Activated CD4-positive, alpha-beta T cell treated with anti-CD3 and anti-CD28 coated beads for 36 hours (primary cell): ENCODE measurements at regions of chr3 and their contacts with region 1.

Region 1: DNA sequence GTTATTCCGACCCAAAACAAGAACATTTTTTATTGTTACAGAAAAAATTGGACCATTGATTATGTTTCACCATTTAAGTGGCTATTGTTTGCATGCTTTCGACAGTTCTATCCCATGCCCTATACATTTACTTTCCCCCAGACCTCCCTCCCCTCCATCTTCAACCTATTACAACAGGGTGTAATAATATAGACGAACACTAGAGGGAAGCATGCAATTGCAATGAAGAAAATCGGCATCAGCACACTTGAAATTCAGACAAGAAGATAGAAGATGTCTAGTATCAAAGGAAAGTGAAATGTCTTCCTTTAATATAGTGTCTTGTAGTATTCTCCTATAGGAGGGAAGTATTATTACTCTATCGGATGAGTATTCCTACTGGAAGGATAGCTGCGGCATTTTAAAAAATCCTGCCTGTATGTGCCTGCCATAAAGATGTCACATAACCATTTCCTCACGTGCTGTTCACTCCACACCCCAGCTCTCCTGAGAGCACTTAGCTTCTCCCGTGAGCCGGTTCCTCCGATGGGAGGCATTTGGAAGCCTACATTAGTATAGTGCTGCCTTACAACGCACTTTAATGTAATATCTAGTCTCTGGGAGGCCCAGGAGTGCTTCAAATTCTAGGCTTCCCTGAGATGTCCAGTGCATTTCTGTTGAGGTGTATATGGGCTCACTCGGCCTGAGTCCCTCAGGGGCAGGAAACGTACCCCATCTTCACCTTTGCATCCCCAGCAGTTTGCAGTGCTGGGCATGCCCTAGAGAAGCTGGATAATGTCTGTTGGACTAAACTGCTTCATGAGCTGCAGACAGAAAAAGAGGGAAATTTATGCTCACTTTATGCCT is 17.8 kb upstream of the ERICH6 start:
- DNase-seq: no peak
- ATAC-seq: peak; percentile 64
- H3K4me3 Mint-ChIP-seq: no peak overlapping the region
- H3K27ac Mint-ChIP-seq: no peak overlapping the region
- H3K4me1 Mint-ChIP-seq: peaks cover 29% of the 10 kb centered on the region
- H3K27me3 Mint-ChIP-seq: no peaks in the 10 kb centered on the region

Region 2: DNA sequence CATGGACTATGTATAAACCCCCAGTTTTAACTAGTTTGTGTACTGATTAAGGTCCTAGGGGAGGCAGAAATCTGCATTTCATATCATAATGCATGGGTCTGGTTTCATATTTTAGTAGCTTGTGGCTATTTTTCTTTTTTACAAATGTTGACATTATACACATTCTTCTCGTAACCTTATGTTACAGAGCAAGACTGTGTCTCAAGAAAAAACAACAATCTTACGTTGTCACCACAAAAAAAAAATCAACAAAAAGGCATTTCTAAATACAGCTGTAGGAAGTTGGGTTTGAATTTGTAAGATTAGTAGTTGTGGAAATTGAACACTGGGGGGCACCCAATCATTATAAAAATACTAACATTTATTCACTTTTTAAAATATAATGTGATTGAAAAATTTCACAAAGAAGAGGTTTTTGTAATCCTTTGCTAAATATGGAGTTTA is 193.1 kb before region 1 on chr3:
- CTCF ChIA-PET with region 1: interaction called, 3 read pairs
- POLR2A ChIA-PET with region 1: no interaction called
- intact Hi-C with region 1: loop called (anchors 1 to 5 kb)
- DNase-seq: no peak
- ATAC-seq: no peak
- H3K4me3 Mint-ChIP-seq: no peak overlapping the region
- H3K27ac Mint-ChIP-seq: no peak overlapping the region
- H3K4me1 Mint-ChIP-seq: peaks cover 8% of the 10 kb centered on the region
- H3K27me3 Mint-ChIP-seq: peaks cover 2% of the 10 kb centered on the region

Region 3: DNA sequence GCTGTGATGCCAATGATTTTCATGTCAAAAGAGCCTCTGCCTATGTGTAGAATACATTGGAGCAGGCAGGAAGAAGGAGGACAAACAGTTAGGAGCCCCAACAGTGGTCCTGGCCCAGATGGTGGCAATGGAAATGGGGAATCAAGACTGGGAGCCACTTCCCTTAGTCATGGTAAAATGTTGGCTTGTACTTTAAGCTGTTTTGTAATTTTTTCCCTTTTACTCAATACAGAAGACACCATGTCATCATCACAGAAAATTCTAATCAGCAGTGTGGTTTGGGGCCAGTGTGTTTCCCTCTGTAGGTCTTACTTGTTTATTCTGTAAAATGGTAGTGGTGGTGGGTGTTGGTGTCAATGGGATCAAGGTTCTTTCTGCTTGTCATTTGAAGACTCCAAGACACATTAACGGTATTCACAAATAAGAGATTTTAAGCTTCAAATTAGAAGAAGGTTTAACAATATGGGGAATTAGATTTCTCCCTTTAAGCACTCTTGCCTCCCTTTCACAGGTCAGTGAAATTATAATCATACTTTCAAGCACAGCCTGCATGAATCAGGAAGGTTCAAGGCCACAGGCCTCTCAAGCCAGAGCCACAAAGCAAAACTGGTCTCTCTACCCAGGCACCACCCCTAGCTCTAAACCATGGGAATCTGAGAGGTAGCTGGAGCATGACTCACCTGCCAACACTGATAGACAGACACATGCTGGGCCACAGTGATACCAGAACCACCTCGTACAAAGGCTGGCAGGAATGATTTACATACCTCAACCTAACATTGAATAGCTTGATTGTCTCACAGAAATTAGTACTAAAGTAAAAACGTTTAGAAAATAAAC is 16.6 kb after region 1 on chr3:
- CTCF ChIA-PET with region 1: interaction called, 10 read pairs
- POLR2A ChIA-PET with region 1: interaction called, 4 read pairs
- intact Hi-C with region 1: loop called (anchors 1 kb)
- DNase-seq: peak; percentile 77
- ATAC-seq: peak; percentile 73
- H3K4me3 Mint-ChIP-seq: peak overlapping the region; percentile 40
- H3K27ac Mint-ChIP-seq: peak overlapping the region; percentile 93
- H3K4me1 Mint-ChIP-seq: peaks cover 72% of the 10 kb centered on the region
- H3K27me3 Mint-ChIP-seq: no peaks in the 10 kb centered on the region

Region 4: GRCh38 chr3:150830094-150830681 is 108.7 kb after region 1 on chr3:
- CTCF ChIA-PET with region 1: interaction called, 7 read pairs
- POLR2A ChIA-PET with region 1: no interaction called
- intact Hi-C with region 1: loop called in 1 of 2 experiments (anchors 1 kb)
- DNase-seq: peak; percentile 33
- ATAC-seq: peak; percentile 60
- H3K4me3 Mint-ChIP-seq: no peak overlapping the region
- H3K27ac Mint-ChIP-seq: no peak overlapping the region
- H3K4me1 Mint-ChIP-seq: no peaks in the 10 kb centered on the region
- H3K27me3 Mint-ChIP-seq: peaks cover 2% of the 10 kb centered on the region

Region 5: GRCh38 chr3:150975086-150975991 is 253.8 kb after region 1 on chr3:
- CTCF ChIA-PET with region 1: no interaction called
- POLR2A ChIA-PET with region 1: no interaction called
- intact Hi-C with region 1: loop called in 1 of 2 experiments (anchors 5 kb)
- DNase-seq: peak; percentile 20
- ATAC-seq: peak; percentile 84
- H3K4me3 Mint-ChIP-seq: no peak overlapping the region
- H3K27ac Mint-ChIP-seq: peak overlapping the region; percentile 63
- H3K4me1 Mint-ChIP-seq: peaks cover 13% of the 10 kb centered on the region
- H3K27me3 Mint-ChIP-seq: peaks cover 19% of the 10 kb centered on the region

Region 6: DNA sequence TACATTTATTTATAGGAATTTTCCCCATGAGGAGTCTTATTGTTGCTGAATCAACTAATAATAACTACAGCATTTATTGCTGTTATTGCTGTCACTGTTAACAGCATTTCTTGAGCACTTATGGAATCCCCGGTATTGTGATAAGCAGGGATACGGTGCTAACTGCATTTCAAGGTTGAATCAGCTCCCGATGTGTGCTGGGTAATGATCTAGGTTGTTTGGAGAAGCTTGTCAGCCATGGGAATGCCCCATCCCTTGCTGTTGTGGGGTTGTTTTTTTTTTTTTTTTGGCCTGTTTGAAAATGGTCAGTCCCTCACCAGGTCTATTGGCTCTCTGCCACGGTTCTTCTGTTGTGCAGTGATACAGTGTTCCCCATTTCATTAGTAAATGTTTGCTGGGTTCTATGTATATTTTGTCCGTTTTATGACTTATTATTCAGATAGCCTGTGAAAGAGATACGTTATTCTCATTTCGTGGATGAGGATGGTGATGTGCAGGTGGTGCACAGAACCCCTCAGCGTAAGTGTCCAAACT is 412.5 kb after region 1 on chr3:
- CTCF ChIA-PET with region 1: no interaction called
- POLR2A ChIA-PET with region 1: no interaction called
- intact Hi-C with region 1: no loop called
- DNase-seq: no peak
- ATAC-seq: no peak
- H3K4me3 Mint-ChIP-seq: no peak overlapping the region
- H3K27ac Mint-ChIP-seq: no peak overlapping the region
- H3K4me1 Mint-ChIP-seq: peaks cover 20% of the 10 kb centered on the region
- H3K27me3 Mint-ChIP-seq: peaks cover 9% of the 10 kb centered on the region

Region 7: GRCh38 chr3:151146071-151146730 is 424.7 kb after region 1 on chr3:
- CTCF ChIA-PET with region 1: interaction called, 7 read pairs
- POLR2A ChIA-PET with region 1: no interaction called
- intact Hi-C with region 1: loop called (anchors 1 to 5 kb)
- DNase-seq: peak; percentile 74
- ATAC-seq: peak; percentile 97
- H3K4me3 Mint-ChIP-seq: no peak overlapping the region
- H3K27ac Mint-ChIP-seq: no peak overlapping the region
- H3K4me1 Mint-ChIP-seq: no peaks in the 10 kb centered on the region
- H3K27me3 Mint-ChIP-seq: peaks cover 3% of the 10 kb centered on the region